A673 (cell line): ENCODE measurements at regions of chr1 and their contacts with region 1.

Region 1: GRCh38 chr1:202160377-202160940 is at the start of gene PTPN7:
- DNase-seq: peak; percentile 51
- H3K4me3 ChIP-seq: no peak within 1 kb of the TSS
- H3K27ac ChIP-seq: no peak within 1 kb of the TSS
- H3K4me1 ChIP-seq: peaks cover 20% of the 10 kb centered on the region
- H3K27me3 ChIP-seq: no peaks in the 10 kb centered on the region
- CTCF ChIP-seq: peak; percentile 38; the same call in 1 of the 2 replicates
- total RNA-seq, gene PTPN7: 0.72 and 2.2 TPM in 2 replicates

Region 2: GRCh38 chr1:201999625-202000238 is 160.7 kb before region 1 on chr1:
- CTCF ChIA-PET with region 1: interaction called, 12 read pairs
- POLR2A ChIA-PET with region 1: no interaction called
- intact Hi-C with region 1: no loop called
- DNase-seq: peak; percentile 70
- H3K4me3 ChIP-seq: no peak overlapping the region
- H3K27ac ChIP-seq: no peak overlapping the region
- H3K4me1 ChIP-seq: no peaks in the 10 kb centered on the region
- H3K27me3 ChIP-seq: no peaks in the 10 kb centered on the region
- CTCF ChIP-seq: peak; percentile 82

Region 3: GRCh38 chr1:202105539-202106276 is 54.8 kb before region 1 on chr1:
- CTCF ChIA-PET with region 1: no interaction called
- POLR2A ChIA-PET with region 1: no interaction called
- intact Hi-C with region 1: no loop called
- DNase-seq: peak; percentile 50
- H3K4me3 ChIP-seq: no peak overlapping the region
- H3K27ac ChIP-seq: no peak overlapping the region
- H3K4me1 ChIP-seq: peaks cover 8% of the 10 kb centered on the region
- H3K27me3 ChIP-seq: no peaks in the 10 kb centered on the region
- CTCF ChIP-seq: no peak